Adrenal gland (tissue), 19 donors: ENCODE measurements at regions of chr19 and their contacts with region 1.

Region 1: GRCh38 chr19:47124937-47125668 is 5.5 kb upstream of the SAE1 start:
- DNase-seq: peak in 1 of 7 donors; percentile 51
- H3K4me3 ChIP-seq: no peak overlapping the region
- H3K27ac ChIP-seq: no peak overlapping the region
- H3K4me1 ChIP-seq: no peaks in the 10 kb centered on the region
- H3K27me3 ChIP-seq: no peaks in the 10 kb centered on the region
- CTCF ChIP-seq: peak; percentile 63 to 86 (median 80)
- POLR2A ChIP-seq: no peak

Region 2: GRCh38 chr19:47035127-47036096 is 89.7 kb before region 1 on chr19:
- intact Hi-C with region 1: loop called (anchors 5 to 10 kb)
- DNase-seq: peak; percentile 81 to 94 (median 85)
- H3K4me3 ChIP-seq: peak overlapping the region in 3 of 4 donors; percentile 1 to 43 (median 40)
- H3K27ac ChIP-seq: peak overlapping the region in 1 of 5 donors; percentile 3
- H3K4me1 ChIP-seq: peaks cover 4 to 9% of the 10 kb centered on the region in 2 donors
- H3K27me3 ChIP-seq: no peaks in the 10 kb centered on the region
- CTCF ChIP-seq: peak; percentile 89 to 96 (median 94)
- POLR2A ChIP-seq: peak in 1 of 2 donors; percentile 38

Region 3: GRCh38 chr19:47075179-47075810 is 49.8 kb before region 1 on chr19:
- intact Hi-C with region 1: loop called (anchors 5 kb)
- DNase-seq: peak in 1 of 7 donors; percentile 15
- H3K4me3 ChIP-seq: no peak overlapping the region
- H3K27ac ChIP-seq: no peak overlapping the region
- H3K4me1 ChIP-seq: peaks cover 0 to 8% of the 10 kb centered on the region in 2 donors
- H3K27me3 ChIP-seq: no peaks in the 10 kb centered on the region
- CTCF ChIP-seq: no peak
- POLR2A ChIP-seq: no peak

Region 4: DNA sequence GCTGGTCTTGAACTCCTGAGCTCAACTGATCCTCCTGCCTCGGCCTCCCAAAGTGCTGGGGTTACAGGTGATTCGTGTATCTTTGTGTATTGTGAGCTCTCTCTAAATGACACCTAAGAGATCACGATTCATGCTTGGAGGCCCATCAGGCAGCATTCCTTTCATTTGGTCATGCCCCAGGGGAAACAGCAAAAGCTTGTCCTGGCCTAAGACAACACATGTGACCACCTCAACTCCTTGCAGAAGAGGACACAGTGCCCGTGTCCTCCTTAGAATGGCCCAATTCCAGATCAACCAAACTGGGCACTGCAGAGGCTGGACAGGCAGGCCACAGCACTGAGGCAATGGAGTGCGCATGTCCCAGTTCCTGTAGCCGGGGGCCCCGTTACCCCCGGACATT is 44.0 kb before region 1 on chr19:
- intact Hi-C with region 1: loop called (anchors 5 kb)
- DNase-seq: no peak
- H3K4me3 ChIP-seq: no peak overlapping the region
- H3K27ac ChIP-seq: no peak overlapping the region
- H3K4me1 ChIP-seq: peaks cover 0 to 8% of the 10 kb centered on the region in 2 donors
- H3K27me3 ChIP-seq: no peaks in the 10 kb centered on the region
- CTCF ChIP-seq: no peak
- POLR2A ChIP-seq: no peak

Region 5: DNA sequence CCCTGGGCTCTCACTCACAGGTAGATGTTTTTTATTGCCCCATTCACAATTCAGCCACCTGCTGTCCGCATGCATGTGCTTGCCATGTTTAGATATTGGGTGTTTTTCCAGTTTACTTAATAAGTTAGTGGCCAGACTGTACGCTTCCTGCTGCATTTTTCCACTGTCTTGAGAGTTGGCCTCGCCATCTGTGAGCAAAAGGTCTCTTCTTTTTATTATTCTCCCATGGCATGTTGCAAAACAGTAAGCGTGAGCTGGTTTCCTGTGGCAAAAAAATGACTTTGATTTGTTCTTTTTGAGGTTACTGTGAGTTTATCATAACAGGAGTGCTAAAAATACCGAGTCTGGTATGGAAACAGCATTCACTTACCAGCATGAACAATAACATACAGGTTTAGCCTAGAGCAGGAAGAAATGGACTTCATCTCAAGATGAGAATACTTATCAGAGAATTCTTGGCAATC is 51.6 kb after region 1 on chr19:
- intact Hi-C with region 1: no loop called
- DNase-seq: peak in 5 of 7 donors; percentile 19 to 66 (median 28)
- H3K4me3 ChIP-seq: no peak overlapping the region
- H3K27ac ChIP-seq: peak overlapping the region in 2 of 5 donors; percentile 46 to 78
- H3K4me1 ChIP-seq: peaks cover 0 to 17% of the 10 kb centered on the region in 2 donors
- H3K27me3 ChIP-seq: no peaks in the 10 kb centered on the region
- CTCF ChIP-seq: no peak
- POLR2A ChIP-seq: no peak